T-cell (primary cell): ENCODE measurements at regions of chr1 and their contacts with region 1.

Region 1: DNA sequence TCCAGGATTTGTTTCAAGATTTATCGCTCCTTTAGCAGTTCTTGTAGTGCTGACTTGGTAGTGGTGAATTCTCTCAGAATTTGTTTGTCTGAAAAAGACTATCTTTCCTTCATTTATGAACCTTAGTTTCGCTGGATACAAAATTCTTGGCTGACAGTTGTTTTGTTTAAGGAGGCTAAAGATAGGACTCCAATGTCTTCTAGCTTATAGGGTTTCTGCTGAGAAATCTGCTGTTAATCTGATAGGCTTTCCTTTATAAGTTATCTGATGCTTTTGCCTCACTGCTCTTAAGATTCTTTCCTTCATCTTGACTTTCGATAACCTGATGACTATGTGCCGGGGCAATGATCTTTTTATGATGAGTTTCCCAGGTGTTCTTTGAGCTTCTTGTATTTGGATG is 28.9 kb downstream of the RPAP2 start:
- DNase-seq: no peak
- ATAC-seq: no peak
- H3K4me3 ChIP-seq: no peak overlapping the region
- H3K4me3 Mint-ChIP-seq: no peak overlapping the region
- H3K27ac ChIP-seq: no peak overlapping the region
- H3K27ac Mint-ChIP-seq: no peak overlapping the region
- H3K4me1 ChIP-seq: peaks cover 0 to 3% of the 10 kb centered on the region in 2 experiments
- H3K4me1 Mint-ChIP-seq: peaks cover 25 to 28% (median 26%) of the 10 kb centered on the region in 3 donors
- H3K27me3 ChIP-seq: no peaks in the 10 kb centered on the region
- H3K27me3 Mint-ChIP-seq: no peaks in the 10 kb centered on the region

Region 2: DNA sequence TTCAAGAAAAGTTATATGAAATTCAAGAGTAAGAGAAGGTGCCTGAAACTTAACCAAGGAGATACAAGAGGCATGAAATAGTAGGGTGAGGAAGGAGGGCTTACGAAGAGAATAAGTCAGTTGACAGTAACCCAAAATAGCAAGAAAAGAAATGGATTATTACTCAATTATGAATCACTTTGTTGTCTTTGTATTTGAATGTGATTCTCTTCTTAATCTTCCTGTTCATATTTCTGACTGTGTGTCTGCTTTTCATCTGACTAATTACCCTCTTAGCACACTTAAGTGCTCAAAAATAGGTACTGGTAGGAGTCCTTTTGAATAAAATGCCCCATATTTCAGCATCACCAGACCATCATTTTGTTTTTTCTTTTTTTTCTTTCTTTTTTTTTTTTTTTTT is 68.4 kb before region 1 on chr1:
- CTCF ChIA-PET with region 1: no interaction called
- POLR2A ChIA-PET with region 1: no interaction called
- DNase-seq: no peak
- ATAC-seq: no peak
- H3K4me3 ChIP-seq: no peak overlapping the region
- H3K4me3 Mint-ChIP-seq: no peak overlapping the region
- H3K27ac ChIP-seq: no peak overlapping the region
- H3K27ac Mint-ChIP-seq: no peak overlapping the region
- H3K4me1 ChIP-seq: no peaks in the 10 kb centered on the region
- H3K4me1 Mint-ChIP-seq: no peaks in the 10 kb centered on the region
- H3K27me3 ChIP-seq: no peaks in the 10 kb centered on the region
- H3K27me3 Mint-ChIP-seq: no peaks in the 10 kb centered on the region

Region 3: GRCh38 chr1:92519043-92519442 is 191.2 kb after region 1 on chr1:
- CTCF ChIA-PET with region 1: no interaction called
- POLR2A ChIA-PET with region 1: interaction called in 1 of 2 experiments, 12 read pairs
- DNase-seq: no peak
- ATAC-seq: no peak
- H3K4me3 ChIP-seq: no peak overlapping the region
- H3K4me3 Mint-ChIP-seq: no peak overlapping the region
- H3K27ac ChIP-seq: no peak overlapping the region
- H3K27ac Mint-ChIP-seq: no peak overlapping the region
- H3K4me1 ChIP-seq: no peaks in the 10 kb centered on the region
- H3K4me1 Mint-ChIP-seq: no peaks in the 10 kb centered on the region
- H3K27me3 ChIP-seq: no peaks in the 10 kb centered on the region
- H3K27me3 Mint-ChIP-seq: no peaks in the 10 kb centered on the region

Region 4: DNA sequence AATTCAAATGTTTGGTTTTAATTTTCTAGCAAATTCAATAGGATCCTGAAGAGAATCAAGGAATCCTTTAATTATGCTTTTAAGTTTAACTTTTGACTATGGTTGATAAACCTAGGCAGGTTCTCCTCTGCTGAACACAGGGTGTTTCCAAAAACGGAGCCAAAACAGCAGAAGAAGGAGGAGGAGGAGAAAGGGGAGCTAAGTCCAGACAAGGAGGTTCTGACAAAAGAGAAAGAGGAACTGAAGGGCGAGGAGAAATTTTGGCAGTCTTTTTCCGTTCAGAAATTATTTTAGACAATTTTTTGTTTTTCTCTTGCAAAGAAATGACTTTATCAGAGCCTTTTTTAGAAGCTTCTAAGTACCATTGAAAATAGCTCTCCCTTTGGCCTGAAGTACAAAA is 1087.0 kb after region 1 on chr1:
- CTCF ChIA-PET with region 1: no interaction called
- POLR2A ChIA-PET with region 1: no interaction called
- DNase-seq: no peak
- ATAC-seq: no peak
- H3K4me3 ChIP-seq: no peak overlapping the region
- H3K4me3 Mint-ChIP-seq: no peak overlapping the region
- H3K27ac ChIP-seq: no peak overlapping the region
- H3K27ac Mint-ChIP-seq: no peak overlapping the region
- H3K4me1 ChIP-seq: no peaks in the 10 kb centered on the region
- H3K4me1 Mint-ChIP-seq: no peaks in the 10 kb centered on the region
- H3K27me3 ChIP-seq: peaks cover 0 to 5% of the 10 kb centered on the region in 2 experiments
- H3K27me3 Mint-ChIP-seq: peaks cover 11% of the 10 kb centered on the region in 2 donors